ENCODE measurements at regions of chr5 and their contacts with region 1.

Region 1: GRCh38 chr5:39164529-39165402 is 54.6 kb downstream of the FYB1 start:
- DNase-seq: no peak
- H3K4me3 Mint-ChIP-seq: peak overlapping the region; percentile 72
- H3K27ac Mint-ChIP-seq: peak overlapping the region; percentile 96
- H3K4me1 Mint-ChIP-seq: peaks cover 85% of the 10 kb centered on the region
- H3K27me3 Mint-ChIP-seq: no peaks in the 10 kb centered on the region

Region 2: DNA sequence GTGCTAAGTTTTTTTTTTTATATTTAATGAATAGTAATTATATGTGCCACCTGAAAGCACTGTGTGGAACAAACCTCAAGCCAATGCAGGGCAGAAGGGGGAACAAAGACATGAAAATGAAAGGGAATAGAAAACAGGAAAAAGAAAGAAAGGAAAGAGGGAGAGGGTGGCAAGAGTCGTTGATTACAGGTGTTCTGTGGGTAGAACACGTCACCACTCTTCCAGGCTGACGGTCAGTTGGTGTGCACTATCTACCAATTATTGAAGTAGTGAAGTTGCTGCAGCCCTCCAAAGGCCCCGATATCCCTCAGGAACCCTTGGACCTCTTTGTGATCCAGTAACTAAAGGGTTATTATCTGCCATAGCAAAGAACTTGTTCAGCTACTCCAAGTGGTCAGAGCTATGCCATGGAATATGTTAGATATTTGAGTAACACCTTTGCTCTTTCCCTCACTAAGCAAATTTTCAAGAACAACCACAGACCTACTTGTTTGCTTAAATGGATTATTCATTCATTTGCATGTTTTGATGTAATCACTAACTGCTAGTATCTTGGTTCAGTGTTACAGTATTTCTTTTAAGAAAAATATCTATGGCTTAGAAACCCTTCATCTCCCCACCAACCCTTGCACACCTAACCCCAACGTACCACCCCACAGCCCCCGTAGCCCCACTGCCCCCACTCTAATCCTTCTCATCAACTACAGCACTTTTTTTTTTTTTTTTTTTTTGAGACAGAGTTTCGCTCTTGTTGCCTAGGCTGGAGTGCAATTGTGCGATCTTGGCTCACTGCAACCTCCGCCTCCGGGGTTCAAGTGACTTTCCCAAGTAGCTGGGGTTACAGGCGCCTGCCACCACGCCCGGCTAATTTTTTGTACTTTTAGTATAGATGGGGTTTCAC is 23.3 kb after region 1 on chr5:
- intact Hi-C with region 1: loop called (anchors 1 kb)
- DNase-seq: no peak
- H3K4me3 Mint-ChIP-seq: peak overlapping the region; percentile 70
- H3K27ac Mint-ChIP-seq: peak overlapping the region; percentile 97
- H3K4me1 Mint-ChIP-seq: peaks cover 95% of the 10 kb centered on the region
- H3K27me3 Mint-ChIP-seq: no peaks in the 10 kb centered on the region

Region 3: DNA sequence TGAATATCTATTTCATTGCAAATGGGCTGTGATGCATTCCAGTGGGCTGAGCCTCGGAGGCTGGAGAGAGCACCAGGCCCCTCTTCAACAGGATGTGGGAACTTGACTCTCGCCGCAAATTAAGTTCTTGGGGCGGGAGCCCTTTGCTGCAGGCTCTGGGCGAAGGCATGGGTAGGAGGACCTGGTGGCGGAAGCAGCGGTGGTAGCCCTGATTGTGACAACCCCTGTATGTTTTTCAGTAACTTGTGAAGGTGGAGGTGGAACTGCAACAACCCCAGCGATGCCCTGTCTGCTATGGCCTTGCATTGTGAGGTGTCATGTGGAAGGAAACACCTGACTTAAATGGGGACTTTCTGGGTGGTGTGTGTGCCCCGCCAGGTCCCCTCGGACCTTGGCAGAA is 45.2 kb after region 1 on chr5:
- intact Hi-C with region 1: loop called (anchors 1 kb)
- DNase-seq: peak; percentile 78
- H3K4me3 Mint-ChIP-seq: peak overlapping the region; percentile 67
- H3K27ac Mint-ChIP-seq: peak overlapping the region; percentile 92
- H3K4me1 Mint-ChIP-seq: peaks cover 94% of the 10 kb centered on the region
- H3K27me3 Mint-ChIP-seq: no peaks in the 10 kb centered on the region

Region 4: DNA sequence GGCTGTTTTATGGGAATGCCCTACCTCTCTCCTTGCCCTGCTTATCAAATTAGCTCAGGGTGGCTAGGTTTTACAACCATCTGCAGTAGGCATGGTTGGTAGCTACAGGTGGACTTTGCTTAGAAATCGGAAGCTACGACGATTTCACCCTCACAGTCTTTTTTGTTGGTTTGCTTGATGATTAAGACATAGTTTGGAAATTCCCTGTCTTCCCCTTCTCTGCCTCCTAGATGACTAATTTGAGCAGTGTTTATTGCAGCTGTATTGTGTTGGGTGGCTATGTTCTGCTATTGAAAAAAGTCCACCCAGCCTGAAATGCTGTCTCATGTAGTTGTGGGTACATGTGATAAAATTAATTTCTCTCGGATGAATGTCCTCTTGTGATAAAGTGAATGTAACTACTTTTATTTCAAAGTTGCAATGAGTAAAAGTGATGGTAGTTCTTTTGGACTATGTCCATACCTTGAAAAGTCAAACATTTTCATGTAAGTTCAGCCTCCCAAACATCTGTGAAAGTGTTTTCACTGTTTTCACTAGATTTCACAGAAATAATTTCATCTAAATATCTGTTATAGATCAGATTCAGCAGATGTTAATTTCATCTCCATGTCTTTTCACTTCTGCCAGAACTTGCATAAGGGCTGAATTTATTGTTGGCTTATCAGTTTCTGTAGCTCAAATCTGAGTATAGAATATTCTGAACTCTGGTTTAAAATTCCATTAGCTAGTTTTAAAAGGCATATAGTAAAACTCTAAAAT is 91.9 kb after region 1 on chr5:
- intact Hi-C with region 1: loop called (anchors 1 kb)
- DNase-seq: peak; percentile 24
- H3K4me3 Mint-ChIP-seq: no peak overlapping the region
- H3K27ac Mint-ChIP-seq: no peak overlapping the region
- H3K4me1 Mint-ChIP-seq: peaks cover 17% of the 10 kb centered on the region
- H3K27me3 Mint-ChIP-seq: peaks cover 2% of the 10 kb centered on the region

Region 5: GRCh38 chr5:40570408-40571129 is 1405.8 kb after region 1 on chr5:
- intact Hi-C with region 1: loop called (anchors 10 kb)
- DNase-seq: no peak
- H3K4me3 Mint-ChIP-seq: no peak overlapping the region
- H3K27ac Mint-ChIP-seq: no peak overlapping the region
- H3K4me1 Mint-ChIP-seq: peaks cover 28% of the 10 kb centered on the region
- H3K27me3 Mint-ChIP-seq: no peaks in the 10 kb centered on the region

Measured in activated T-helper 1 cell treated with anti-CD3 and anti-CD28 coated beads, Interleukin-12 subunit alpha, Interleukin-12 subunit beta, Interleukin-2, Interleukin-4 antibody, amounts not matched to agents 30 ng/mL and 10 ng/mL and 1 ng/mL, durations not matched to agents 14 hours and 24 hours and 36 hours (primary cell).